ENCODE measurements at regions of chr6 and their contacts with region 1.

Region 1: GRCh38 chr6:30828027-30828960 is 56.0 kb upstream of the DDR1 start:
- DNase-seq: peak; percentile 84 to 90 (median 89)
- ATAC-seq: peak; percentile 90 to 95 (median 94)
- H3K4me3 ChIP-seq: peak overlapping the region in 6 of 12 donors; percentile 6 to 44 (median 14)
- H3K27ac ChIP-seq: peak overlapping the region; percentile 11 to 86 (median 75)
- H3K4me1 ChIP-seq: peaks cover 0 to 53% (median 16%) of the 10 kb centered on the region in 12 donors
- H3K27me3 ChIP-seq: no peaks in the 10 kb centered on the region
- CTCF ChIP-seq: peak; percentile 92 to 98 (median 94)
- POLR2A ChIP-seq: peak in 1 of 2 donors; percentile 15

Region 2: GRCh38 chr6:30130887-30131862 is 697.1 kb before region 1 on chr6:
- intact Hi-C with region 1: no loop called
- DNase-seq: peak in 4 of 5 donors; percentile 56 to 66 (median 64)
- ATAC-seq: peak in 3 of 4 donors; percentile 90 to 93 (median 91)
- H3K4me3 ChIP-seq: no peak overlapping the region
- H3K27ac ChIP-seq: no peak overlapping the region
- H3K4me1 ChIP-seq: peaks cover 0 to 17% (median 4%) of the 10 kb centered on the region in 12 donors
- H3K27me3 ChIP-seq: peaks cover 21 to 92% (median 46%) of the 10 kb centered on the region in 9 donors
- CTCF ChIP-seq: peak; percentile 84 to 99 (median 96)
- POLR2A ChIP-seq: no peak

Region 3: DNA sequence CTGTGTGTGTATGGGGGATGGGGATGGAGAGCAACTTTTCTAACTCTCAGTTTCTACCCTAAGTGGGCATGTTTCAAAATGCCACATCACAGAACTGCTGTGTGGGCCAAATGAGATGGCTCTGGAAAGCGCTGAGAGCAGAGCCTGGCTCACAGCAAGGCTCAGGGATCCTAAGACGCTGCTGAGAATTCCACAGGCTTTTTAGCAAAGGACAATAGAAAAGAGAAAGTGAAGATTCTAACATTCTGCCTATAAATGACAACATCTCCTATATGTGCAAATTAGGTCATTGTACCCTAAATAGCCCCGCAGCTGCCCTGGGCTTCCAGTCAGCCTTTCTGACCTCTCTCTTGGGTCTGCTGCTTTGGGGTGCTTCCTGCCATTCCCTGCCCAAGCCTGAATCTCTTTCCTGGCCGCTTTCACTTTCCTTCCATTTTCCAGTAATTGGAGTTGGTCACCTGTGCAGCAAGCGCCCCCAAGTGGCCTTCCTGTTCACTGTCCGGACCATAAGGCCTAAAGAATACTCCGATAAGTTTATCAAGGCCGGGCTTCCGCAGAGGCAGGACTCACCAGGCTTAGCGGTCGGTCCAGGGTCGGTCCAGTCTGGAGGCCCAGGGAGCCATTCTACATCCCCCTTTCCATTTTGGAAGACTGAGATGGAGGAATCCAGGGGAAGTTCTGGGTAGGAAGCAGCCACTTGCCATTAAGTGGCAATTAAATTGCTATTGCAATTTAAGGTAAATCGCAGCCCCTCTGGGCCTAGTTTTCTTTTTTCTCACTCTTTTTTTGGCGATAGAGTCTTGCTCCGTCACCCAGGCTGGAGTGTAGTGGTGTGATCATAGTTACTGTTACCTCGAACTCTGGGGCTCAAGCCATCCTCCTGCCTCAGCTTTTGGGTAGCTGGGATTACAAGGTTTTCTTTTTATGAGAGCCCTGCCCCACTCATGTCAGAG is 49.4 kb after region 1 on chr6:
- intact Hi-C with region 1: loop called (anchors 1 to 2 kb)
- DNase-seq: peak; percentile 88 to 92 (median 89)
- ATAC-seq: peak; percentile 87 to 93 (median 90)
- H3K4me3 ChIP-seq: peak overlapping the region in 11 of 12 donors; percentile 14 to 56 (median 40)
- H3K27ac ChIP-seq: peak overlapping the region; percentile 22 to 85 (median 62)
- H3K4me1 ChIP-seq: peaks cover 0 to 32% (median 13%) of the 10 kb centered on the region in 12 donors
- H3K27me3 ChIP-seq: no peaks in the 10 kb centered on the region
- CTCF ChIP-seq: peak; percentile 77 to 95 (median 90)
- POLR2A ChIP-seq: no peak

Region 4: GRCh38 chr6:31068669-31069340 is 240.5 kb after region 1 on chr6:
- intact Hi-C with region 1: loop called in 2 of 10 experiments (anchors 5 kb)
- DNase-seq: peak; percentile 59 to 85 (median 76)
- ATAC-seq: peak; percentile 74 to 92 (median 90)
- H3K4me3 ChIP-seq: no peak overlapping the region
- H3K27ac ChIP-seq: no peak overlapping the region
- H3K4me1 ChIP-seq: peaks cover 0 to 9% (median 0%) of the 10 kb centered on the region in 12 donors
- H3K27me3 ChIP-seq: no peaks in the 10 kb centered on the region
- CTCF ChIP-seq: peak; percentile 72 to 95 (median 87)
- POLR2A ChIP-seq: no peak

Region 5: GRCh38 chr6:31079656-31080261 is 251.5 kb after region 1 on chr6:
- intact Hi-C with region 1: loop called in 7 of 10 experiments (anchors 5 kb)
- DNase-seq: peak in 4 of 5 donors; percentile 42 to 59 (median 52)
- ATAC-seq: peak in 3 of 4 donors; percentile 66 to 75 (median 69)
- H3K4me3 ChIP-seq: peak overlapping the region in 9 of 12 donors; percentile 13 to 49 (median 29)
- H3K27ac ChIP-seq: no peak overlapping the region
- H3K4me1 ChIP-seq: peaks cover 0 to 19% (median 4%) of the 10 kb centered on the region in 12 donors
- H3K27me3 ChIP-seq: no peaks in the 10 kb centered on the region
- CTCF ChIP-seq: peak; percentile 63 to 92 (median 78)
- POLR2A ChIP-seq: no peak

Region 6: GRCh38 chr6:31197559-31198305 is 369.4 kb after region 1 on chr6:
- intact Hi-C with region 1: no loop called
- DNase-seq: peak; percentile 93 to 96 (median 94)
- ATAC-seq: peak; percentile 88 to 94 (median 90)
- H3K4me3 ChIP-seq: peak overlapping the region; percentile 48 to 87 (median 80)
- H3K27ac ChIP-seq: peak overlapping the region; percentile 95 to 99 (median 98)
- H3K4me1 ChIP-seq: peaks cover 0 to 31% (median 11%) of the 10 kb centered on the region in 12 donors
- H3K27me3 ChIP-seq: no peaks in the 10 kb centered on the region
- CTCF ChIP-seq: no peak
- POLR2A ChIP-seq: peak in 1 of 2 donors; percentile 64

Measured in heart left ventricle (tissue), 16 donors.